CD4-positive, alpha-beta memory T cell (primary cell): ENCODE measurements at regions of chr1 and their contacts with region 1.

Region 1: DNA sequence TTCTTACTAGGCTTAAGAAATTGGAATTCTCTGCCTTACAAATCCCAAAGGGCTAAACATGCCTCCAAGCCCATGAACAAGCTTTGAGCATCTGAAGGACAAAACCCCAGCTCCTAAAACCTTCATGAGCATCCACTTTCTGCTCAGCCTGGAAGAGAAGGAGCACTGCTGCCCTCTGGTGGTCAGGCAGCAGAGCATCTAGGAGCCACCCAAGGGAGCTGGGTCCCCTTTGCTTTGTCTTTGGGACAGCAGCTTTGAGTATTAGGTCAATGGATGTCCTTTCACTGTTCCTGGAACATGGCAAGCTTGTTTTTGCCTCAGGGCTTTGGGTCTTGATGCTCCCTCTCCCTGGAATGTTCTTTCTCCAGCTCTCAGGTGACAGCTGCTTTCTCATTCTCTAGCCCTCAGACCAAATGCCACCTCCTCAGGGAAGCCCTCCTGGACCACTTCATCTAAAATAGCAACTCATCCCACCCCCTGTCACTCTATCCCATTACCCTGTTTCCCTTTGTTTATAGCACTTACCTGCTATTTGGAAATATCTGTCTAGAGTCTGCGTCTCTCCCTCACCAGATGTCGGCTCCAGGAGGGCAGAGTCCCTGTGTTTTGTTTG is 25.7 kb downstream of the RAB7B start:
- DNase-seq: peak; percentile 63 to 70 (median 69)
- H3K4me3 ChIP-seq: no peak overlapping the region
- H3K4me3 Mint-ChIP-seq: no peak overlapping the region
- H3K27ac ChIP-seq: no peak overlapping the region
- H3K27ac Mint-ChIP-seq: peak overlapping the region in 1 of 7 donors; percentile 5
- H3K4me1 ChIP-seq: no peaks in the 10 kb centered on the region
- H3K4me1 Mint-ChIP-seq: peaks cover 0 to 6% (median under 1%) of the 10 kb centered on the region in 4 donors
- H3K27me3 ChIP-seq: no peaks in the 10 kb centered on the region
- H3K27me3 Mint-ChIP-seq: peaks cover 4 to 7% of the 10 kb centered on the region in 2 donors

Region 2: GRCh38 chr1:205141236-205142101 is 836.0 kb before region 1 on chr1:
- CTCF ChIA-PET with region 1: no interaction called
- POLR2A ChIA-PET with region 1: no interaction called
- intact Hi-C with region 1: no loop called
- DNase-seq: peak; percentile 53 to 73 (median 64)
- H3K4me3 ChIP-seq: no peak overlapping the region
- H3K4me3 Mint-ChIP-seq: peak overlapping the region in 5 of 8 donors; percentile 8 to 68 (median 62)
- H3K27ac ChIP-seq: no peak overlapping the region
- H3K27ac Mint-ChIP-seq: peak overlapping the region in 1 of 7 donors; percentile 1
- H3K4me1 ChIP-seq: peaks cover 11% of the 10 kb centered on the region
- H3K4me1 Mint-ChIP-seq: peaks cover 4 to 11% (median 6%) of the 10 kb centered on the region in 4 donors
- H3K27me3 ChIP-seq: no peaks in the 10 kb centered on the region
- H3K27me3 Mint-ChIP-seq: no peaks in the 10 kb centered on the region

Region 3: DNA sequence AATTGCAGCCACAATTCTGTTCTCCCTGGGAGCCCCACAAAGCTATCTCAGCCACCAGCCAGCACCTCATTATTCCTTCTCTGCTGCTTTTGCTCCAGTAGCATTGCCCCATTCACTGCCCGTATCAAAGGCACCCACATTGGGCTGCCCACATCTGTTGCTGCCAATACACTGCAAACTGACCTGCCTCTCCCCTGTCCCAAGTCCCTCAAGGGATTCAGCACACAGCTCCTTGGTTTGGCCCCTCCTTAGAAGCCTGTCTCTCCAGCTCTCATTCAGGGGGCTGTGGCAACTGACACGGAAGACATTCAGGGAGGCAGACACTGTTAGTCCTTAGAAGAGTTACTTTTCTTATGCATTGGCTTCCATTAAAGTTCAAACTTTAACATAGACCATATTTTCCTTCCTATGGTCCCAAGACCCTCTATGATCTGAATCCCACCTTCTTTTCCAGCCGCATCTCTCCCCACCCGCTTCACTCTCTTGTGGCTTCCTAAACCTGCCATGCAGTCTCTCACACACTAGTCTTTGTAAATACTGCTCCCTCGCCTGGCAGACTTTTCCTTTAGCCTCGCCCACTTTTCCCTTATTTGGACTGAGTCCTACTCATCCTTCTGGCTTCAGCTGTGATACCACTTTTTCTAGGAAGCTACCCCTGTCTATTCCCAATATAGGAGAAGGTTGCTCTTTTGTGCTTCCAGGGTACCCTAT is 601.5 kb before region 1 on chr1:
- CTCF ChIA-PET with region 1: no interaction called
- POLR2A ChIA-PET with region 1: no interaction called
- intact Hi-C with region 1: no loop called
- DNase-seq: no peak
- H3K4me3 ChIP-seq: no peak overlapping the region
- H3K4me3 Mint-ChIP-seq: peak overlapping the region in 1 of 8 donors; percentile 58
- H3K27ac ChIP-seq: no peak overlapping the region
- H3K27ac Mint-ChIP-seq: peak overlapping the region in 1 of 7 donors; percentile 7
- H3K4me1 ChIP-seq: peaks cover 16% of the 10 kb centered on the region
- H3K4me1 Mint-ChIP-seq: peaks cover 18 to 39% (median 22%) of the 10 kb centered on the region in 4 donors
- H3K27me3 ChIP-seq: no peaks in the 10 kb centered on the region
- H3K27me3 Mint-ChIP-seq: peaks cover 11 to 16% of the 10 kb centered on the region in 2 donors

Region 4: DNA sequence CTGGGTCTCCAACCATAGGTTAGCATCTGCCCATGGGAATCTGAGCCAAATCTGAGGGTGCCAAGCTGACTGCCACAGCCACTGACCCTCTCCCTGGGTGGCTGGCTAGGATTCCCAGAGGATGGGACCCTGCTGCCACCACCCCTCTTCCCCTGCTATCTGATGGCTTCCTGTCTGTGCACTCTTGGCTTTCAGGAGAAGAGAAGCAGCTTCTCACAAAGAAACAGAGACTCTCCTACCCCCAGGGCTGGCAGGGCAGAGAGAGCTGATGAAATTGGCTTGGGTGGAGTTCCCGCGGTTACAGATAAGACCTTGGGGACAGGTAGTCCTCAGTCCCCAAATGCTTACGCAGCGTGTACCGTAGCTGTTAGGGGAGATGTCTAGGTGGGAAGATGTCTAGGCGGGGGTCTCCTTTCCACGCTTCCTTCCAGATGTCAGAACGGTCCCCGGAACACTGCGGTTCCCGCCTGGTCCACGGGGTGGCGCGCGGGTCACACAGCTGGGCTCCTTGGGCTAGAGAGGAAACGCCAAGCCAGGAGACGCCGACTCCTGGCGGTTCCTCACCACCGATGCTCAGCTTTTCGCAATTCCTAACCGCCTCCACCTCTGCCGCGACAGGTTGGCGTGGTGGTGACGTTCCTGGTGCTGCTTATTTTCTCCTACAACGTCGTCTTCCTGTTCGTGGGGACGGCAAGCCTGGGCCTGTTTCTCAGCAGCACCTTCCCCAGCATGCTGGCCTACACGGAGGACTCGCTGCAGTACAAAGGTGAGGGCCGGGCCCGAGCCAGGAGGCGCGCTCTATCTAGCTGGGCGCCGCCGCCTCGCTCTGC is 385.8 kb before region 1 on chr1:
- CTCF ChIA-PET with region 1: interaction called, 25 read pairs
- POLR2A ChIA-PET with region 1: no interaction called
- intact Hi-C with region 1: loop called (anchors 1 kb)
- DNase-seq: peak; percentile 85 to 89 (median 86)
- H3K4me3 ChIP-seq: peak overlapping the region in 1 of 2 donors; percentile 61
- H3K4me3 Mint-ChIP-seq: peak overlapping the region; percentile 87 to 93 (median 90)
- H3K27ac ChIP-seq: peak overlapping the region; percentile 52
- H3K27ac Mint-ChIP-seq: peak overlapping the region; percentile 82 to 96 (median 89)
- H3K4me1 ChIP-seq: peaks cover 21% of the 10 kb centered on the region
- H3K4me1 Mint-ChIP-seq: peaks cover 17 to 34% (median 25%) of the 10 kb centered on the region in 4 donors
- H3K27me3 ChIP-seq: no peaks in the 10 kb centered on the region
- H3K27me3 Mint-ChIP-seq: no peaks in the 10 kb centered on the region

Region 5: GRCh38 chr1:205783904-205784303 is 193.6 kb before region 1 on chr1:
- CTCF ChIA-PET with region 1: interaction called, 268 read pairs
- POLR2A ChIA-PET with region 1: no interaction called
- intact Hi-C with region 1: no loop called
- DNase-seq: no peak
- H3K4me3 ChIP-seq: no peak overlapping the region
- H3K4me3 Mint-ChIP-seq: no peak overlapping the region
- H3K27ac ChIP-seq: no peak overlapping the region
- H3K27ac Mint-ChIP-seq: peak overlapping the region in 1 of 7 donors; percentile 22
- H3K4me1 ChIP-seq: peaks cover 8% of the 10 kb centered on the region
- H3K4me1 Mint-ChIP-seq: peaks cover 7 to 12% (median 10%) of the 10 kb centered on the region in 4 donors
- H3K27me3 ChIP-seq: no peaks in the 10 kb centered on the region
- H3K27me3 Mint-ChIP-seq: no peaks in the 10 kb centered on the region

Region 6: DNA sequence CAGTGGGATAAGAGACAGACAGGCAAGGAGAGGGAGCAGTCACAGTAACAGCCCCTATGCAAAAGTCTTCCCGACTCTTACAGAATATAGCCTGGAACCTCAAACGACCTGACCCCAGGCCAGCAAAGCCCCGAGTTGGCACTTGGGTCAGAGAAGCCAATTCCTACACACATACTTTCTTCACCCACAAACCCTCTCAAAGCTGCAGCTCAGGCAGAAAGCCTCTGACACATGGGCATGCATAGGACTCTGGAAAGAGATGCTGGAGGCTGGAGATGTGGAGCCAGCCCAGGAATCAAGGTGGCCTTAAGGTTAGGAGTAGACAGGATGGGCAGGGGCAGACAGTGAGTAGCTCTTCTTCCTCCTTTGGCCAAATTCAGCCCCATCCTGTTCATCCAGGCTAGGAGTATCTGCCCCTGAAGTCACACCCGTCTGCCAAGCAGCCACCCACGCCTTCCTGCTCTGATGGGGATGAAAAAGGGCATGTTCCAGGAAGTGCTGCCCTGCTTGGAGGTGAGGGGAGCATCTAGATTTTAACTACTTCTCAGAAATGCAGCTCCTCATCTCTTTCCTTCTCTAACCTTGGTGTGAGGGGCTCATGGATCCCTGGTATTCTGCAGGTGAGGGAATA is 172.3 kb before region 1 on chr1:
- CTCF ChIA-PET with region 1: interaction called, 10 read pairs
- POLR2A ChIA-PET with region 1: no interaction called
- intact Hi-C with region 1: no loop called
- DNase-seq: peak in 1 of 5 donors; percentile 15
- H3K4me3 ChIP-seq: no peak overlapping the region
- H3K4me3 Mint-ChIP-seq: peak overlapping the region in 7 of 8 donors; percentile 56 to 81 (median 76)
- H3K27ac ChIP-seq: peak overlapping the region; percentile 27
- H3K27ac Mint-ChIP-seq: peak overlapping the region; percentile 28 to 88 (median 85)
- H3K4me1 ChIP-seq: peaks cover 55% of the 10 kb centered on the region
- H3K4me1 Mint-ChIP-seq: peaks cover 45 to 81% (median 61%) of the 10 kb centered on the region in 4 donors
- H3K27me3 ChIP-seq: no peaks in the 10 kb centered on the region
- H3K27me3 Mint-ChIP-seq: no peaks in the 10 kb centered on the region

Region 7: DNA sequence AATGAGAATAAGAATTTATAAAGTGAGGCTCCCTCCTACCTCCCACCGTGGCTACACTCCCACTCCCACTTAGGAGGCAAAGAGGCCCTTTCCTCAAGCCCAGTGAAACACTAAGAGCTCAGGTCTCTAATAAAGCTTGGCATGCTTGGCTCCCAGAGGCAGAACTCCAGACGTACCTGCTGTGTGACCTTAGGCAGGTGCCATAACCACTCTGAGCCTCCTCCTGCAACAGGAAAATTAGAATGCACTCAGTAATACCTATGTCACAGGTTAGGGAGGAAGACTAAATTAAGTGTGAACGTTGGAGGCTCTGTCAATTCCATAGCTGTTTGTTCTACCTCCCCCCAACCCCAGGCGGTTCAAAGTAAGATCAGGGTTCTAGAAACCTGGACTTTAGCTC is 17.7 kb before region 1 on chr1:
- CTCF ChIA-PET with region 1: interaction called, 14 read pairs
- POLR2A ChIA-PET with region 1: no interaction called
- intact Hi-C with region 1: no loop called
- DNase-seq: no peak
- H3K4me3 ChIP-seq: no peak overlapping the region
- H3K4me3 Mint-ChIP-seq: no peak overlapping the region
- H3K27ac ChIP-seq: no peak overlapping the region
- H3K27ac Mint-ChIP-seq: no peak overlapping the region
- H3K4me1 ChIP-seq: no peaks in the 10 kb centered on the region
- H3K4me1 Mint-ChIP-seq: no peaks in the 10 kb centered on the region
- H3K27me3 ChIP-seq: no peaks in the 10 kb centered on the region
- H3K27me3 Mint-ChIP-seq: peaks cover 8 to 10% of the 10 kb centered on the region in 2 donors